HEK293 (cell line): ENCODE measurements at regions of chr20 and their contacts with region 1.

Region 1: GRCh38 chr20:3710703-3711483 is 1.5 kb downstream of the SIGLEC1 start:
- H3K4me3 ChIP-seq: no peak overlapping the region
- H3K27ac ChIP-seq: no peak overlapping the region
- H3K4me1 ChIP-seq: no peaks in the 10 kb centered on the region
- CTCF ChIP-seq: peak; percentile 88

Region 2: GRCh38 chr20:3563548-3564177 is 147.2 kb before region 1 on chr20:
- CTCF ChIA-PET with region 1: interaction called, 40 read pairs
- POLR2A ChIA-PET with region 1: no interaction called
- H3K4me3 ChIP-seq: no peak overlapping the region
- H3K27ac ChIP-seq: no peak overlapping the region
- H3K4me1 ChIP-seq: no peaks in the 10 kb centered on the region
- CTCF ChIP-seq: peak; percentile 60

Region 3: DNA sequence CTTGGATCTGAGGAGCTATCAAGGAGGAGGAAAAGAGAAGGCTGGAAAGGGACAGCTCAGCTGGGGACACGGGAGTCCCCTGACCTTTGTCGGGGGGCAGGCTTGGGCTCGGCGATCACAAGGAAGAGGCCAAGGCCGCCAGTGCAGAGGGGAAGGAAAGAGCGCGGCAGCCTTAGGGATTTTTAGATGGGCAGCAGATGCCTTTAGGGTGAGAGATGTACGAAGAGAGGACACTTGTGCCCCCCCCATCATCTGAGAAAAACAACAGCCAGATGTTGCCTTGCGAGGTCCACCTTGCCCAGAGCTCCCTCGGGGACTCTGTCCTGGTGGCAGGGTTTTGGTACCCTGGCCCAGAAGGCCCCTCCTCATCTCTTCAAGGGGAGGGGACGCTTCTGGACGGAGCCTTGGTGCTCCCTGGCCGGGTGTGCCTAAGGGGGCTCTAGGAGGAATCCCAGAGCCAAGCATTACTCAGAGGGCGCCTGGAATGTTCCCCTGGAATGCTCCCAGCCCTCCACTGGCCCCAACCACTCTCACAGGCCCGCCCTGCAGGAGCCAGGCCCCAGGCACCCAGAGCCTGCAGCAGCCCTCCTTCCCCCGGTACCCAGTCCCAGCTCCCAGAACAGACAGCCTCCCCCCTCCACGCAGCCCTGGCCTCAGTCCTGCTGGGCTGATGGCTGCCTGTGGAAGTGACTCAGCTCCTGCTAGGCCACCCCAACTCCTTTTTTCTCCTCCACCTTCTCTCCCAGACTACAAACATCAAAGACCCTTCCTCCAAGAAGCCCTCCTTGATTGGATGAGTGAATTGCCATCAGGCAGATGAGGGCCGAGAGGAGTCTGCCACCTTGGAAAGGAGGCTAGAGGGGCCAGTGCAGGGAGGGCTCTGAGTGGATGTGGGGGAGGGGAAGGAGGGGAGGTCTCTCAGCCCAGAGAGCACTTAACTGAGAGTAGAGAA is 30.9 kb before region 1 on chr20:
- CTCF ChIA-PET with region 1: interaction called, 94 read pairs
- POLR2A ChIA-PET with region 1: no interaction called
- H3K4me3 ChIP-seq: no peak overlapping the region
- H3K27ac ChIP-seq: no peak overlapping the region
- H3K4me1 ChIP-seq: 0 out of 2 replicates have a peak, but pooled peaks cover 2% of the 10 kb centered on the region
- CTCF ChIP-seq: no peak

Region 4: DNA sequence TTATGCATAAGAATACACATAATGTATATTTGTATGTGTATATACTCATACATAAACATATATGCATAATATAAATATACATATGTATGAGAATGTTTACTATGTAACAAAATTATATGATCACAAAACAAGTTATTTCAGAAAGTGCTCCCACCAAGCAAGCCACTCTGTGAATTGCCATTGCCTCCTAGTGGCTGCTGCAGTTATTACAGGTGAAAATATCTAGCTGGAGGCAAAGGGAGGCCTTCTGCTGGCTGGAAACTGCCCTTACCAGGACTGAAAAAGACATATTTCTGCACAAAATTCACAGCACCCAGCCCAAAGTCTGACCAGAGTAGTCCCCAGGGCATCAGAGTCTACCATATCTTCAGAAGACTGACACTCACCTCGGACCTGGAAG is 14.7 kb before region 1 on chr20:
- CTCF ChIA-PET with region 1: interaction called, 40 read pairs
- POLR2A ChIA-PET with region 1: interaction called, 3 read pairs
- H3K4me3 ChIP-seq: no peak overlapping the region
- H3K27ac ChIP-seq: no peak overlapping the region
- H3K4me1 ChIP-seq: no peaks in the 10 kb centered on the region
- CTCF ChIP-seq: no peak

Region 5: DNA sequence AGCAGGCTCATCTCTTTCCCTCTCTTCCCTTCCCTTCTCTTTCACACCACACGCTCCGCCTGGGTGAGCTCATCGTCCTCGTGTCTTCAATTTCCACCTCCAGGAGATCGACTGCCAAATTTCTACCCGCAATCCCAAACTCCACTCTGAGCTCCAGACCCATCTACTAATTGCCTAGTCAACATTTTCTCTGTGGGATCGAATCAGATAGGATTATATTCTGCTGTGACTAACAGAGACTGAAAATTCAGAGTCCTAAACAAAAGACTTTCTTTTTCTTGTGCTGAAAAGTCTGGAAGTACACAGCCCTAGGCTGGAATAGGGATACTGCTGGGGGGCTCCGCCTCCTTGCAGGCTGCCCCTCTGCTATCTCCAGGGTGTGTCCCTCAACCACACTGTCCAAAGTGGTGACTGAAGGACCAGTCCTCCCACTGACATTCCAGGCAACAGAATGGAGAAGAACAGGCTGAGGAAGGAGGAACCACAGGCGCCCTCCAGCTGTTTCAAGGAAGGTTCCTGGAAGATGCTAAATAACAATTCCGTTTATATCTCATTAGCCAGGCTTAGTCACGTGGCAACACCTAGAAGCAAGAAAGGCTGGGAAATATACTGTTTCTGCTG is 16.6 kb after region 1 on chr20:
- CTCF ChIA-PET with region 1: interaction called, 14 read pairs
- POLR2A ChIA-PET with region 1: interaction called, 3 read pairs
- H3K4me3 ChIP-seq: peak overlapping the region; percentile 6; the same call in 1 of the 2 replicates
- H3K27ac ChIP-seq: no peak overlapping the region
- H3K4me1 ChIP-seq: peaks cover 10% of the 10 kb centered on the region
- CTCF ChIP-seq: no peak

Region 6: DNA sequence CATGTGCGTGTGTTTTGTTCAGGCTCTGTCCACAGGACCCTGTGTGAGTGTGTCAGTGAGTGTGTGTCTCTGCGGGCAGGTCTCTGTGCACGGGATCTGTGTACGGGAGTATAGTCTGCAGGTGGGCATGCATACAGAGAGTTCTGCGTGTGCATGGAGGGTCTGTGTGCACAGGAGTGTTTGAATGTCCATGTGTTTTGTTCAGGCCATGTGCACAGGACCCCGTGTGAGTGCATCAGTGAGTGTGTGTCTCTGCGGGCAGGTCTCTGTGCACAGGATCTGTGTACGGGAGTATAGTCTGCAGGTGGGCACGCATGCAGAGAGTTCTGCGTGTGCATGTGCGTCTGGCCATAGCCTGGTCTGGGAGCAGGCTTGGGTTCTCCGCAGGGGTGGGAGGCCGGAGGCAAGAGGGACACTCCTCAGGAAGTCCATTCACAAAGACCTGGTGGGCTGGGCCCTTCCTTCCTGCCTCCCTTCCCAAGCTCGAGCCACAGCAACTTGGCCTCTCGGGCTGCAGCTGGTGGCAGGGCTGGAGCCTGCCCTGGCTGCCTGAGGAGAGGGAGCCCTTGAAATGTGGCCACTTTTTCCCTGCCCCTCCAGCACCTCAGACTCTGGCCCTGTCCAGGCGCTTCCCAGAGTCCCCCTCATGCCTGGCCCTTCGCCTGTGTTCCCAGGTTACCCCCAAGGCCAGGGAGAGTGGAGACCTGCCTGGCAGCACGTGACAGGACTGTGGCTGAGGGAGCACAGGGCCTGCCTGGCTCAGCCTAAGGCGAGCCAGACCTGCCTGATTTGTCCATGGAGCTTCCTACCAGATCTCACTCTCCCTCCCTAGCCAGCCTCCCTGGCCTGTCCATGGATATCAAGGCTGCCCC is 28.4 kb after region 1 on chr20:
- CTCF ChIA-PET with region 1: interaction called, 23 read pairs
- POLR2A ChIA-PET with region 1: no interaction called
- H3K4me3 ChIP-seq: no peak overlapping the region
- H3K27ac ChIP-seq: no peak overlapping the region
- H3K4me1 ChIP-seq: peaks cover 10% of the 10 kb centered on the region; the same call in 1 of the 2 replicates
- CTCF ChIP-seq: no peak

Region 7: GRCh38 chr20:3767427-3768341 is 56.8 kb after region 1 on chr20 and contains the start of gene ADISSP:
- CTCF ChIA-PET with region 1: interaction called, 20 read pairs
- POLR2A ChIA-PET with region 1: interaction called, 8 read pairs
- H3K4me3 ChIP-seq: peak within 1 kb of the TSS; percentile 74
- H3K27ac ChIP-seq: peak within 1 kb of the TSS; percentile 68
- H3K4me1 ChIP-seq: peaks cover 7% of the 10 kb centered on the region
- CTCF ChIP-seq: peak; percentile 44; the same call in 1 of the 2 replicates